Posterior cingulate gyrus (tissue), 11 donors: ENCODE measurements at regions of chr9 and their contacts with region 1.

Region 1: DNA sequence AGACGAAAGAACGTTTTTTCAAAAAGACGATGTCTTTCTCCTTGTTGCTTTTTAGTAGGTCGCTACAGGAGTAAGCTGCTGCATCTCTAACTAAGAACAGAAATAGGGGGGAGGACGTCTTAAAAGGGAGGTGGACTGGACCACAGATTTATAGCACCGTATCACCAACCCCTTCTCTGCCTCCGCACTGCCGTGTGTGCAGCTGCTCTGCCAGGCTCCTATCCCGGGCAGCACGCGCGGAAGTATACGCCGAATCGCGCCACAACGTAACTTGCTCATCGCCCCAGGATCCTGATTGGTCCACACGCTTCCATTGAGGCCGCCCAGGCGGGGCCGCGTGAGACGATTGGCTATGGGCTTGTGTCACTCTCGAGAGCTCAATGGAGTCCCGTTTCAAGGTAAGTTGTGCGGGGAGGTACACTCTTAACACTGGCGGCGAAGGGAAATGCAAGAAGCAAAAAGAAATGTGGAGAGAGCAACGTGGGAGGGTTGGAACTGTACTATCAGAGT is at the start of gene ELAVL2:
- DNase-seq: peak; percentile 80 to 99 (median 97)

Region 2: GRCh38 chr9:23663536-23663935 is 162.6 kb before region 1 on chr9:
- intact Hi-C with region 1: loop called (anchors 10 kb)
- DNase-seq: no peak